BJ (cell line): ENCODE measurements at regions of chr2 and their contacts with region 1.

Region 1: DNA sequence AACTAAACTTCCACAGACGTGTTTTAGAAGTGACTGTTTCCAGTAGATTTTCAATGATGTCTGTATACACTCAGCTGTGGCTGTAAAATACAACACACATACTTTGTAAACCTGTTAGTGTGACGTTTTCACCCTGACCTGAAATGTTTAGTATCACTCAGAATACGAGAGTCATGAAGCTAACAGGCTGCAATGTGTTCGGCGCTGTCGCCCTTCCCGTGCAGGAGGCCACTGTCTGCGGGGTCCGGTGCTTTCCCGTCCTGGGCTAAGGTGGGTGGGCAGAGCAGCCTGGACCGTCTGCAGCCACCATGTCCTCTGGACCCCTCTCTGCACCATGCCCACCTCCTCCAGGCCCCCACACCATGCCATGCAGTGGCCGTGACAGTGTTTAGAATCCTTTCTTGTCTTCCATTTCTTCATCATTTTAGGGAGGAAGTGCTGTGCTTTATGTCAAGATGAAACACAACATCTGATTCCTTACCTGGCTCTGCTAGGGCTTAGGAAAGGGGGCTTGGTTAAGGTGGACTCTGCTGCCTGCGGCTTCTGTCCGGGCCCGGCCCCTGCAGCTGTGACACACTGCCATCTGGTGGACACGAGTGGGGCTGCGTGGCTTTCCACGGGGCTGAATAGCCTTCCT is 53.8 kb upstream of the RBM44 start:
- DNase-seq: no peak
- H3K4me3 ChIP-seq: no peak overlapping the region
- H3K27me3 ChIP-seq: no peaks in the 10 kb centered on the region
- CTCF ChIP-seq: peak; percentile 99

Region 2: GRCh38 chr2:237603718-237604362 is 140.9 kb before region 1 on chr2:
- CTCF ChIA-PET with region 1: interaction called, 72 read pairs
- POLR2A ChIA-PET with region 1: no interaction called
- DNase-seq: no peak
- H3K4me3 ChIP-seq: no peak overlapping the region
- H3K27me3 ChIP-seq: no peaks in the 10 kb centered on the region
- CTCF ChIP-seq: no peak

Region 3: GRCh38 chr2:237685408-237685807 is 59.3 kb before region 1 on chr2:
- CTCF ChIA-PET with region 1: interaction called, 18 read pairs
- POLR2A ChIA-PET with region 1: no interaction called
- DNase-seq: no peak
- H3K4me3 ChIP-seq: no peak overlapping the region
- H3K27me3 ChIP-seq: no peaks in the 10 kb centered on the region
- CTCF ChIP-seq: peak; percentile 47

Region 4: DNA sequence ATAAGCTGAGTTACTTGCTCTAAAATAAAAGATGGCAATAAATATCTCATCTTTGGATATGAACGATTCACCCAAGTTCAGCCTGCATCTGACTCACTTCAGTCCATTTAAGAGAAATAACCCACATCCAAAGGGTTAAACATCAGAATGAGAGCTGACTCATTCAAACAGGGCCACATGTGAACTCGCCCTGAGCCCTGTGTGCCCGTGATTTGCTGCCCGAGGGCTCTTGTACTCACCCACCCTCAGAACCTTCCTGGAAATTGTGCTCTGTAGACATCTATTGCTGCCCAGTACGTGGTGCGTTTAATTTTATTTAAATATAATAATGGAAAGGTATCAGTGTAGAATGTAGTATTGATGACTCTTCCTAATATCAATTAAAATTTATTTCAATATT is 13.1 kb before region 1 on chr2:
- CTCF ChIA-PET with region 1: interaction called, 22 read pairs
- POLR2A ChIA-PET with region 1: no interaction called
- DNase-seq: no peak
- H3K4me3 ChIP-seq: no peak overlapping the region
- H3K27me3 ChIP-seq: no peaks in the 10 kb centered on the region
- CTCF ChIP-seq: no peak

Region 5: GRCh38 chr2:237886685-237887481 is 142.2 kb after region 1 on chr2:
- CTCF ChIA-PET with region 1: no interaction called
- POLR2A ChIA-PET with region 1: no interaction called
- DNase-seq: no peak
- H3K4me3 ChIP-seq: no peak overlapping the region
- H3K27me3 ChIP-seq: no peaks in the 10 kb centered on the region
- CTCF ChIP-seq: no peak